AG04449 (cell line): ENCODE measurements at regions of chr4 and their contacts with region 1.

Region 1: GRCh38 chr4:4334798-4335520 is 44.9 kb downstream of the ZBTB49 start:
- DNase-seq: no peak
- H3K4me3 ChIP-seq: no peak overlapping the region
- CTCF ChIP-seq: peak; percentile 82

Region 2: DNA sequence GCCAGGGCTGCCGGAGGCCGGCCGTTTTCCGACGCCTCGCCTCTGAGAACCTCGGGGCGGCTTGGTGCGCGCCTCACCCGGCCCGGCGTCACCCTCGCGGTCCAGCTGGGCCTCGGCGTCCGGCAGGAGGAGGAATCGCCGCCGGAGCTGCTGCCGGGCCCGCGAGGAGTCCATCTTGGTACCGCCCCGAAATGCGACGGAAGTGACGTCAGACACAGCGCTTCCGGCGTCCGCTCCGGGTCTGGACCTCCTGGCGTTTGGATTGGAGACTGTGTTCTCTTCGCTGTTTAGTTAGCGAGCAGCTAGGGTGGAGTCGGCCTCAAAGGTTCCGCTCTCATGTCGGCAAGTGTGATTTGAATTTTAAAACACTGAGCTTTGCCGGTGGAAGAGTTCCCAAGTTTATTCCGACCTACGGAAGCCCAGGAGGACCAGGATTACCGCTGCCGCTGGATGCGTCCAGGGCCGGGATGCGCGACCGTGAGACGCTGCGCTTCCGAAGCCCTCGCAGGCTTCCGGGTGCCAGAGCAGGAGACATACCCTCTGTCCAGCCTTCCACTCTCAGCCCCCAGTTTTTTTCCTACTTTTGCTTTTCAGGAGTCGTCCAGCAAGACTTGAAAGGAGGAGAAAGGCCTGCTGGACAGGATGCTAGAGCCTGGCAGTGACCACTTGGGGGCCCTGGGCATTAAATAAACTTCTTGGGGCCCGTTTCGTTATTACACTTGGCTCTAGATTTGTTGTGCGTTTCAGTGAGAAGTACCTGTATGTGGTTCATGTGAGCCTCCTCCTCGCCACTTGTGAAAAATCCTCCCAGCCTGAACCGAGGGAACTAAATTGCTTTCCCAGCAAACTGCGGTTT is 86.7 kb before region 1 on chr4 and contains the start of gene TMEM128:
- CTCF ChIA-PET with region 1: interaction called, 14 read pairs
- POLR2A ChIA-PET with region 1: no interaction called
- DNase-seq: peak; percentile 55
- H3K4me3 ChIP-seq: peak within 1 kb of the TSS; percentile 77
- CTCF ChIP-seq: peak; percentile 3

Region 3: GRCh38 chr4:4323705-4324534 is 11.0 kb before region 1 on chr4:
- CTCF ChIA-PET with region 1: interaction called, 10 read pairs
- POLR2A ChIA-PET with region 1: no interaction called
- DNase-seq: no peak
- H3K4me3 ChIP-seq: no peak overlapping the region
- CTCF ChIP-seq: no peak